CD8-positive, alpha-beta T cell (primary cell): ENCODE measurements at regions of chr17 and their contacts with region 1.

Region 1: GRCh38 chr17:27805520-27806146 is 5.3 kb upstream of the NOS2 start:
- DNase-seq: peak; percentile 62 to 91 (median 79)
- ATAC-seq: peak; percentile 69
- H3K4me3 ChIP-seq: peak overlapping the region; percentile 44 to 54
- H3K4me3 Mint-ChIP-seq: peak overlapping the region; percentile 84
- H3K27ac ChIP-seq: peak overlapping the region; percentile 24 to 56
- H3K27ac Mint-ChIP-seq: peak overlapping the region; percentile 94
- H3K4me1 ChIP-seq: peaks cover 21% of the 10 kb centered on the region
- H3K4me1 Mint-ChIP-seq: peaks cover 27% of the 10 kb centered on the region
- H3K27me3 ChIP-seq: no peaks in the 10 kb centered on the region
- H3K27me3 Mint-ChIP-seq: no peaks in the 10 kb centered on the region
- CTCF ChIP-seq: peak; percentile 69

Region 2: GRCh38 chr17:27818401-27819105 is 12.9 kb after region 1 on chr17:
- CTCF ChIA-PET with region 1: interaction called, 13 read pairs
- POLR2A ChIA-PET with region 1: no interaction called
- intact Hi-C with region 1: no loop called
- DNase-seq: no peak
- ATAC-seq: no peak
- H3K4me3 ChIP-seq: no peak overlapping the region
- H3K4me3 Mint-ChIP-seq: no peak overlapping the region
- H3K27ac ChIP-seq: no peak overlapping the region
- H3K27ac Mint-ChIP-seq: no peak overlapping the region
- H3K4me1 ChIP-seq: no peaks in the 10 kb centered on the region
- H3K4me1 Mint-ChIP-seq: no peaks in the 10 kb centered on the region
- H3K27me3 ChIP-seq: no peaks in the 10 kb centered on the region
- H3K27me3 Mint-ChIP-seq: no peaks in the 10 kb centered on the region
- CTCF ChIP-seq: no peak

Region 3: GRCh38 chr17:27858621-27859305 is 53.1 kb after region 1 on chr17:
- CTCF ChIA-PET with region 1: interaction called, 11 read pairs
- POLR2A ChIA-PET with region 1: no interaction called
- intact Hi-C with region 1: no loop called
- DNase-seq: no peak
- ATAC-seq: no peak
- H3K4me3 ChIP-seq: no peak overlapping the region
- H3K4me3 Mint-ChIP-seq: no peak overlapping the region
- H3K27ac ChIP-seq: no peak overlapping the region
- H3K27ac Mint-ChIP-seq: no peak overlapping the region
- H3K4me1 ChIP-seq: no peaks in the 10 kb centered on the region
- H3K4me1 Mint-ChIP-seq: no peaks in the 10 kb centered on the region
- H3K27me3 ChIP-seq: no peaks in the 10 kb centered on the region
- H3K27me3 Mint-ChIP-seq: peaks cover 6% of the 10 kb centered on the region
- CTCF ChIP-seq: no peak

Region 4: DNA sequence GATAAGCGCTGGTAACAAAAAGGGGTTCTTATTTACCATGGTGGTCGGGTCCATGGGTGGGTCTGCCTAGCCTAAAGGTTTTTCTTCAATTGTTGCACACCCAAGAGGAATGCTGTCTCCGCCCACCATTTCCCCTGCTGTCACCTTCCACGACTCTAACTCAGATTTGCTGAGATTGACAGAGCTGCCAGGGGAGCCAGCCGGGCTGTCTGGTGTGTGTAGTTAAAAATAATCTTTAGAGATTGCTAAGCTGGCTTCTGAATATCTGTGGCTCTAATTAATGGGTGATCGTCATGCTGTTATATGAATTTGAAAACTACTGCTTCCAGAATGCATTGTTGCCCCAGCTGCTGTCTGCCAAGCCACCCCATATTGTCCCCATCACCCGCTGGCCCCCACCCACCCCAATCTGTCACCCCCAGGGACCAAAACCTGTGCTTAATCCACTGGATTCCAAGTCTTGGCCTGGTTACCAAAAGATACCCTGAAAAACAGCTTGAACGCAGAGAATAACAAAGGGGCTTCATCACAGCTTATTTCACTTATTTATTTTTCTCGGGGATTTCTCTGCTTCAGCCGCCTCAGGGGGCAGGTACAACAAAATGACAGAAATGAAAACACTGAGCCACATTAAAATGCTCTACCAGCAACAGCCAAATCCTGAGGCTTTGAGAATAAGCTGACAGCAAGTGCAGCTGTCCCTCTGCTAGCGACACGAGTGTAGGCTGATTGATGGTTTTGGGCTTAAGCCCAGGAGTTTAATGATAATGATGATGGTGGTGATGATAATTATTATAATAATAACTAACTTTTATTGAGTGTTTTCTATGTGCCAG is 190.8 kb after region 1 on chr17:
- CTCF ChIA-PET with region 1: no interaction called
- POLR2A ChIA-PET with region 1: no interaction called
- intact Hi-C with region 1: no loop called
- DNase-seq: no peak
- ATAC-seq: no peak
- H3K4me3 ChIP-seq: no peak overlapping the region
- H3K4me3 Mint-ChIP-seq: no peak overlapping the region
- H3K27ac ChIP-seq: no peak overlapping the region
- H3K27ac Mint-ChIP-seq: no peak overlapping the region
- H3K4me1 ChIP-seq: no peaks in the 10 kb centered on the region
- H3K4me1 Mint-ChIP-seq: no peaks in the 10 kb centered on the region
- H3K27me3 ChIP-seq: no peaks in the 10 kb centered on the region
- H3K27me3 Mint-ChIP-seq: peaks cover 21% of the 10 kb centered on the region
- CTCF ChIP-seq: no peak

Region 5: DNA sequence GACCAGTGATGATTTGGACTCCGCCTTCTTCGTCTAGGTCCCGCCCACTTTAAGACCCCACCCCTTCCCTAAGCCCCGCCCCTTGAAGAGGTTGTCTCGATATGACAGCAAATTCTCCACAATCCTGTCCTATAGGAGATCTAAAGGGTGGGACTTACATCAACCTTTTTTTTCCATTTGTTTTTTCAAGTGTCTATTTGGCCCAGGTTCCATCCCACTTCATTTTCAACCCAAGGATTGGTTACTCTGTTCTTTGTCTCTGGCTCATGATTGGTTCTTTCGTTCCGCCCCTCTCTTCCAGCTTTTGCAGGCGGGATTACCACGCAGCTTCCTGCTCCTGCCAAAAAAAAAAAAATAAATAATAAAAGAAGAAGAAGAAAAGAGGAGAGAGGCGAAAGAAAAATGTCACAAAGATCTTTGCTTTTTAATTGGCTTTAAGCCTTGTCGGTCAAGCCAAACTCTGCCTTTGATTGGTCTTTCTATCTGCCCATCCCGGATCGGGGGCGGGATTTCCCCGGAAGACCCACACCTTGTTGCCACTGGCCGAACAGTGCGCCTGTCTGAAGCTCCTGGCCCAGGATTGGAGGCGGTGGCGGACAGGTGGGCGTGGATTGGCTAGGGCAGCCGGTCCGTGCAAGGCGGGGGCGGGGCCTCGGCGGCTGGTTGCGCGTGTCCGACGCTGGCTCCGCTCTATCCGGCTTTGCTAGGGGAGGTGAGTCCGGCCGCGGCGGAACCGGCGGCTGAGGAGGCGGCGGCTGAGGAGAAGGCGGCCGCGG is 235.6 kb after region 1 on chr17:
- CTCF ChIA-PET with region 1: no interaction called
- POLR2A ChIA-PET with region 1: interaction called, 3 read pairs
- intact Hi-C with region 1: loop called (anchors 2 to 5 kb)
- DNase-seq: peak; percentile 97 to 100 (median 99)
- ATAC-seq: peak; percentile 91
- H3K4me3 ChIP-seq: peak overlapping the region; percentile 62 to 76
- H3K4me3 Mint-ChIP-seq: peak overlapping the region; percentile 87
- H3K27ac ChIP-seq: peak overlapping the region; percentile 24 to 77
- H3K27ac Mint-ChIP-seq: peak overlapping the region; percentile 89
- H3K4me1 ChIP-seq: peaks cover 27% of the 10 kb centered on the region
- H3K4me1 Mint-ChIP-seq: peaks cover 53% of the 10 kb centered on the region
- H3K27me3 ChIP-seq: no peaks in the 10 kb centered on the region
- H3K27me3 Mint-ChIP-seq: no peaks in the 10 kb centered on the region
- CTCF ChIP-seq: no peak

Region 6: GRCh38 chr17:28252436-28252835 is 446.8 kb after region 1 on chr17:
- CTCF ChIA-PET with region 1: interaction called, 20 read pairs
- POLR2A ChIA-PET with region 1: interaction called, 3 read pairs
- intact Hi-C with region 1: loop called in 1 of 2 experiments (anchors 1 kb)
- DNase-seq: no peak
- ATAC-seq: no peak
- H3K4me3 ChIP-seq: no peak overlapping the region
- H3K4me3 Mint-ChIP-seq: no peak overlapping the region
- H3K27ac ChIP-seq: no peak overlapping the region
- H3K27ac Mint-ChIP-seq: no peak overlapping the region
- H3K4me1 ChIP-seq: peaks cover 4% of the 10 kb centered on the region
- H3K4me1 Mint-ChIP-seq: peaks cover 7% of the 10 kb centered on the region
- H3K27me3 ChIP-seq: peaks cover 0 to 5% of the 10 kb centered on the region in 2 experiments
- H3K27me3 Mint-ChIP-seq: peaks cover 33% of the 10 kb centered on the region
- CTCF ChIP-seq: no peak